ENCODE measurements at regions of chr22 and their contacts with region 1.

Region 1: GRCh38 chr22:40898850-40899357 is 37.0 kb upstream of the DNAJB7 start:
- DNase-seq: peak; percentile 38
- ATAC-seq: peak; percentile 94
- H3K4me3 Mint-ChIP-seq: peak overlapping the region; percentile 15
- H3K27ac Mint-ChIP-seq: peak overlapping the region; percentile 81
- H3K4me1 Mint-ChIP-seq: peaks cover 14% of the 10 kb centered on the region
- H3K27me3 Mint-ChIP-seq: no peaks in the 10 kb centered on the region

Region 2: DNA sequence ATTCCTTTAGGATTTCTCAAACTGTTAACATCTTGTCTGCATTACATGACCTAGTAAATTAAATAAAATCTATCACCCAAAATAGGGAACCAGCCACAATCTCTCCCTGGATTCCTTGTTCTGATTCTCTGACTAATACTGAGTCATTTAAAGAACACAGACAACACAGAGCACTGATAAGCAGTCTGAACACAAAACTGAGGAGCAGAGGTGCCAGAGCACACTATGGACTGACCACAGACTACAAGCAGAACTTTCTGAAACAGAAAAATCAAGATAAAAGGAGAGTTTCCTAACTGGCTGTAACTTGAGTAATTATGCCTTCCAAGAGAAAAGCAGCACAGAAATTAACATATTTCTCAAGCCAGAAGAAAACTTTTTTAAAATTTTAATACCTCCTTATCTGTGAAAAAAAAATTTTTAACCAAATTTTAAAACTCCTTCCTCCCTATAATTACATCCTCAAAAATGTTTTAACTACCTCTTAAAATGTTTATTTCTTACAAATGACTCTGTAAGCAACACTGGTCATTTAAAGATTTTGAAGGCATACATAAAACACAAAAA is 399.6 kb before region 1 on chr22:
- CTCF ChIA-PET with region 1: no interaction called
- POLR2A ChIA-PET with region 1: no interaction called
- intact Hi-C with region 1: no loop called
- DNase-seq: no peak
- ATAC-seq: peak; percentile 73
- H3K4me3 Mint-ChIP-seq: no peak overlapping the region
- H3K27ac Mint-ChIP-seq: no peak overlapping the region
- H3K4me1 Mint-ChIP-seq: peaks cover 35% of the 10 kb centered on the region
- H3K27me3 Mint-ChIP-seq: no peaks in the 10 kb centered on the region

Region 3: DNA sequence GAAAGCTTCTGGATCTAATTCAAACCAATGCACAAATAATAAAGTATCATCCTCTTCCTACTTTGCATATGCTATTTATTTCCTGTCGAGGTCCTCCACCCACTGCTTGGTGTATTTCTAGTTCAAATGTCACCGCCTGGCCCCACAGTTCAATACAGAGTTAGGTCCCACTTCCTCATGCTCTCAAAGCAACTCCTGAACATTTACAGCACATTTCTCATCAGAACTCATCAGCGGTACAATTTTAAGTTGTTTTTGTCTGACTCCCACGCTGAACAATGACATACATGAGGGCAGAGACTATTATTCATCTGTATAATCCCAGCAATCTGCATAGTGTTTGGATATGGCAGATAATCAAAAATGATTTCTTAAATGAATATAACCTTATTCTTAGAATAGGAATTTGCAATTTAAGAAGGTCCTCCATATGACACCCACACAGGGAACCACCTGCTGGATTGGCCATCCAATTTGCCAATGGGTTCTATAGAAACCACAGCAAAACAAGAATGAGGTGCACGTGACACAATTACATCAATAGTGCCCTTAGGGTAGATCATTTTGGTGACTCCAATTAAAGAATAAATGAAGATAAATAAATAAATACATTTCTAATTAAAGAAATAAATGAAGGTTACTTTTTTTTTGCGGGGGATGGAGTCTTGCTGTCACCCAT is 134.0 kb before region 1 on chr22:
- CTCF ChIA-PET with region 1: no interaction called
- POLR2A ChIA-PET with region 1: no interaction called
- intact Hi-C with region 1: loop called in 1 of 2 experiments (anchors 2 kb)
- DNase-seq: peak; percentile 32
- ATAC-seq: peak; percentile 61
- H3K4me3 Mint-ChIP-seq: no peak overlapping the region
- H3K27ac Mint-ChIP-seq: peak overlapping the region; percentile 84
- H3K4me1 Mint-ChIP-seq: peaks cover 23% of the 10 kb centered on the region
- H3K27me3 Mint-ChIP-seq: no peaks in the 10 kb centered on the region

Region 4: GRCh38 chr22:40818747-40819598 is 79.9 kb before region 1 on chr22 and contains the start of gene SLC25A17:
- CTCF ChIA-PET with region 1: interaction called, 5 read pairs
- POLR2A ChIA-PET with region 1: no interaction called
- intact Hi-C with region 1: loop called in 1 of 2 experiments (anchors 1 kb)
- DNase-seq: peak; percentile 93
- ATAC-seq: peak; percentile 93
- H3K4me3 Mint-ChIP-seq: peak within 1 kb of the TSS; percentile 88
- H3K27ac Mint-ChIP-seq: peak within 1 kb of the TSS; percentile 92
- H3K4me1 Mint-ChIP-seq: peaks cover 30% of the 10 kb centered on the region
- H3K27me3 Mint-ChIP-seq: no peaks in the 10 kb centered on the region
- total RNA-seq, gene SLC25A17: 23.3 to 29.7 TPM

Measured in activated CD4-positive, alpha-beta T cell treated with anti-CD3 and anti-CD28 coated beads for 36 hours (primary cell).